Right ventricle myocardium inferior (tissue), 1 donor: ENCODE measurements at regions of chr1 and their contacts with region 1.

Region 1: GRCh38 chr1:154272217-154272998 is at the start of gene HAX1:
- DNase-seq: peak; percentile 96
- ATAC-seq: peak; percentile 91
- total RNA-seq, gene HAX1: 184 TPM

Region 2: DNA sequence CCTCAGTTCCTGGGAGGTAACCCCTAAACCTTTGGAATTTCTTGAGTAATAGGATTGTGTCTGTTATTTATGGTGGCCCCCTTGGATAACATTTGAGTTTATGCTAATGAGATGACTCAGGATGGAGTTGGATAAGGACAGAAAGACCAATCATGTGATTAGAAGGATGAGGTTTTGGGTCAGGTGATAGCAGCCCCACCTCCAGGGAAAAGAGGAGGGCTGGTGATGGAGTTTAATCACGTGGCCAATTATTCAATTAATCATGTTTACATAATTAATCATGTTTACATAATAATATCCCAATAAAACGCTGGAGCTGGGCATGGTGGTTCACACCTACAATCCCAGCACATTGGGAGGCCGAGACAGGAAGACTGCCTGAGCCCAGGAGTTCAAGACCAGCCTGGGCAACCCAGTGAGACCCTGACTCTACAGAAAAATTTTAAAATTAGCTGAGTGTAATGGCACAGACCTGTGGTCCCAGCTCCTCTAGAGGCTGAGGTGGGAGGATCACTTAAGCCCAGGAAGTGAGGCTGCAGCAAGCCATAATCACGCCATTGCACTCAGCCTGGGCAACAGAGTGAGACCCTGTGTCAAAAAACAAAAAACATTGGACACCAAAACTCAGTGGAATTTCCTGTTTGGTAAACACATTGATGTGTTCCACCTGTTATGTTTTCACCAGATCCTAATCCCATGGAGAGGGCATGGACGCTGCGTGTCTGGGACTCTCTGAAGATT is 190.9 kb before region 1 on chr1:
- intact Hi-C with region 1: no loop called
- DNase-seq: no peak
- ATAC-seq: no peak

Region 3: GRCh38 chr1:154145986-154146385 is 126.4 kb before region 1 on chr1:
- intact Hi-C with region 1: no loop called
- DNase-seq: no peak
- ATAC-seq: no peak

Region 4: DNA sequence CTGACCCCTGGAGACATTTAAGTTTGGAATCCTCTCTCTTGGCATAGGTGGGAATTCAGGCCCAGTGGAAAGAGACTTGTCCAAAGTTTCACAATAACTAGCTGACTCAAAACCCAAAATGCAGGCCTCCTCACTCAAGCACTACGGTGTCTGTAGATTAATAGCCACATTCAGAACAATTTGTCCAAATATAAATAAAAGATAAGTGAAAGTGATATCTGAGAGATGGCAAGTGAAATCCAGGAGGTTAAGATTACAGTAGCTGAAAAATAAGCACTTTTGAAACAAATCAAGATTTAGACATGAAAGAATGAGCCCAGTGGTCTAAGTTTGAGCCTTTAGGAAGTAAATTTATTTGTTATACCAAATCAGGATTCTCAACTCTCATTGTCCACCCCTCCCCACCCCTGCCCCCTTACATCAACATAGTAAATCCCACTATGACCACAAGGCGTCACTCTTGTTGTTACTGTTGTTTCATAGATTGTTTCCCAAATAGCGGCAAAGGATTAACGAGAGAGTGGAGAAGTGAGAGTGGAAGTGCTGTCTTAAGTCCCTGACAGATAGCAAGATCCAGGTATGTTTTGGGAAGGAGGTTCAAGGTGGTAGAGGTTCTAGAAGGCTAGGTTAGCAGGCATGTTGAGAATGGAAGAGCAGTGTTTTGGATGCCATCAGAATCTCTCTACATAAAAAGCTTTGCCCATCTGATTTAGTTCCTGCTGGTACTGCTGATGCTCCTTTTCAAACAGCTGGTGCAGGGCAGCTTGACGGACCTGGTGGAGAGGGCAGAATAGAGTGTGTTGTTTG is 73.4 kb before region 1 on chr1:
- intact Hi-C with region 1: loop called (anchors 1 kb)
- DNase-seq: no peak
- ATAC-seq: peak; percentile 62

Region 5: GRCh38 chr1:154220071-154220969 is 52.1 kb before region 1 on chr1 and contains the start of gene UBAP2L:
- intact Hi-C with region 1: loop called (anchors 2 kb)
- DNase-seq: peak; percentile 100
- ATAC-seq: peak; percentile 97
- total RNA-seq, gene UBAP2L: 90.2 TPM

Region 6: DNA sequence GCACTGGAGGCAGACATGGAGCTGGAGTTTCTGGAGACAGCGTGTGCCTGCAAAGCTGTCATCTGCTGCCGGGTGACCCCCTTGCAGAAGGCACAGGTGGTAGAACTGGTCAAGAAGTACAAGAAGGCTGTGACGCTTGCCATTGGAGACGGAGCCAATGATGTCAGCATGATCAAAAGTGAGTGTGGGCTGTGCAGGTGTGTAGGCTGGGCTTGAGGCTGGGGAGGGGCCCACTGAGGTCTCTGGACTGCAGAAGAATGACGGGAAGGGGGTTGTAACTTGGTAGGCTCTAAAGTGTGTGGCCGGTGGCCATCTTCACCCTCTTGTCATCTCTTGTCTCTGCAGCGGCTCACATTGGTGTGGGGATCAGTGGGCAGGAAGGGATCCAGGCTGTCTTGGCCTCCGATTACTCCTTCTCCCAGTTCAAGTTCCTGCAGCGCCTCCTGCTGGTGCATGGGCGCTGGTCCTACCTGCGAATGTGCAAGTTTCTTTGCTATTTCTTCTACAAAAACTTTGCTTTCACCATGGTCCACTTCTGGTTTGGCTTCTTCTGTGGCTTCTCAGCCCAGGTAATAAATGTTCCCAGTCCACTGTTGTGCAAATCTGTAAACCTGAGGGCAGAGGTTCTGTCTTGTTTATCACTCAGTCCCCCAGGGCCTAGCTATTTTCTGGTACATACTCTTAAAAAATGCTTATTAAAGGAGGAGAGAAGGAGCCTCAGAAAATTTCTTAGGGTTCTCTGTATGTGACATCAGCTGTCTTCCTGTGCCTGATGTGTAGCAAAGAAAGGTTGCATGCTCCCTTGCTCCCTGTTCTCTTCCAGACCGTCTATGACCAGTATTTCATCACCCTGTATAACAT is 72.8 kb after region 1 on chr1:
- intact Hi-C with region 1: no loop called
- DNase-seq: peak; percentile 77
- ATAC-seq: no peak

Region 7: GRCh38 chr1:154404984-154405761 is 132.8 kb after region 1 on chr1 and contains the start of gene IL6R:
- intact Hi-C with region 1: no loop called
- DNase-seq: peak; percentile 98
- ATAC-seq: peak; percentile 93
- total RNA-seq, gene IL6R: 13.1 TPM